ENCODE measurements at regions of chr11 and their contacts with region 1.

Region 1: DNA sequence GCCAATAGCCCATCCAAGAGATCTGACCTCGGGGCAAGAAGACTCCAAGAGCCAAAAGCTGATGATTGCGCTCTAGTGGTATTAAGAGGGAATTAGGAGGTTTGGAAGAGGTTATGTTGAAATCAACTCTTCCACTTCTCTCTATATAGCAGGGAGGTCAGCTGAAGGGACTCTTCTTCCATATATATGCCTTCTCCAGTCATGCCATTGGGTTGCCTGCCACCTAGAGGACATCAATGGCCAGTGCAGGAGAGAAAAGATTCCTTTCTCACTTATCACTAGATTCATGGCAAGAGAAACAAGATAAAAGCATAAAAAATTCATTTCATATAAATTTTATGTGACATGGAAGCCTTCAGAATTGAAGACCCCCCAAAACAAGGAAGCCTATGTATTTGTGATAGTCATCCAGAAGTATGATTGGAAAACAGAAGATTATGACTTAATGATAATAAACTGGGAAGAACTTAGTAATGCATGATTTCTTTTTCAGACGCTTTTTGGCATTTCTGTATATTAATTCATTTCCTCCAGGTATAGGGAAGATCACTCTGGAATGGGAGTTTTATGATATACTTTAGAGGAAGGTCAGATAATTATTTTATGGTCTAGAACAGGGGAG is 435.1 kb upstream of the DDI1 start:
- DNase-seq: no peak

Region 2: GRCh38 chr11:103326070-103326794 is 275.1 kb before region 1 on chr11:
- intact Hi-C with region 1: loop called (anchors 5 kb)
- DNase-seq: no peak

Region 3: DNA sequence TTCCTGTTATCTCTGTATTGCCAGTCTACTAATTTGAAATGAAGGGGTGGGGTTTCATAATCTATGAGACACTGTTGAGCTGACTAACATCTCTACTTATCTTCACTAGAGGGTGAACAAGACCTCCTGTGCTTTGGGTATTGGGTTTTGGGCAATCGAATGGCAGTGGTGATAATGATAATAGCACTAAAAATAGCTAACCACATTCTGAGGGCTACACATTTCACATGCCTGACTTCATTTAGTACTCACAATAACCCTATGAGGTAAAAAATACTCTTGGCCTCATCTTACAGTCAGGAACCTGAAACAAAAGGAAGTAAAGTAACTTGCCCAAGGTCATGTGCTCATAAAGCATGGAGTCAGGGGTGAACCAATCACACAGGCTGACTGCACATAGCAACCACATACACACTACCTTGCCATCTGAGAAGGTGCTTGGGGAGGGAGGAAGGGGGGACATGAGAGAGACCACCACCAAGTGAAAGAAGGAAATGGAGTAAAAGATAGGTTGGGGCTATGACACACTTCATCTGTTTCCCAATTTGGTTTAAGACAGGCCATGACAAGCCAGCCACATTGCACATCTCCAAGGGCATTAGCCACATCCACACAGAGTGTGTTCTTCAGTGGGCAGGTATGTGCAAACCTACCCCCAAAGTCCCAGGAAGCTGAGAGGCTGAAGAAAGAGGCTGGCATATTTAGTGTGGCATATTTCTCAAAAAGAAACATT is 47.5 kb after region 1 on chr11:
- intact Hi-C with region 1: no loop called
- DNase-seq: no peak

Measured in cardiac septum (tissue), 1 donor.